Dorsolateral prefrontal cortex (tissue), 120 donors: ENCODE measurements at regions of chr13 and their contacts with region 1.

Region 1: GRCh38 chr13:110108347-110109174 is 198.4 kb downstream of the COL4A1 start:
- DNase-seq: peak; percentile 28 to 87 (median 82)
- H3K4me3 ChIP-seq: no peak overlapping the region
- H3K27ac ChIP-seq: peak overlapping the region in 15 of 59 donors; percentile 14 to 76 (median 50)
- H3K27me3 ChIP-seq: no peaks in the 10 kb centered on the region
- CTCF ChIP-seq: peak; percentile 16 to 82 (median 68)

Region 2: DNA sequence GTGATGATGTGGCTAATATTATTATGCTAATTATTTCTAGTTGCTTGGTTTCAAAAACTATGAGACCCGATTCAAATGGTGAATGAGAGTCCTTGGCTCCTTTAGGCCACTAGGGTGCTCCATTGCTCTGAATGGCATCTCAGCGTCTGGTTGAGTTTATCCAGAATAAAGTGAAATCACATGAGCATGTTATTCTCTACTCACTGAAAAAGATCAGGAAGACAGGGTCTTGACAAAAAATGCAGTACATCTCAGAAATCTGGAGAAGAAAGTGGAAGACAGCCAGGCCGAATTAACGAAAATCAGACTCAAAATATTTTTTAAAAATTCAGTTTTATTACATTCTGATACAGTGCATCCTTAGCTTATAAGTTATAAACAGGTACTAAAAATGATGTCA is 962.9 kb before region 1 on chr13:
- intact Hi-C with region 1: loop called in 1 of 2 experiments (anchors 10 kb)
- DNase-seq: peak in 2 of 10 donors; percentile 48 to 59
- H3K4me3 ChIP-seq: no peak overlapping the region
- H3K27ac ChIP-seq: no peak overlapping the region
- H3K27me3 ChIP-seq: peaks cover 0 to 22% (median 5%) of the 10 kb centered on the region in 45 donors
- CTCF ChIP-seq: peak in 55 of 56 donors; percentile 34 to 82 (median 67)

Region 3: DNA sequence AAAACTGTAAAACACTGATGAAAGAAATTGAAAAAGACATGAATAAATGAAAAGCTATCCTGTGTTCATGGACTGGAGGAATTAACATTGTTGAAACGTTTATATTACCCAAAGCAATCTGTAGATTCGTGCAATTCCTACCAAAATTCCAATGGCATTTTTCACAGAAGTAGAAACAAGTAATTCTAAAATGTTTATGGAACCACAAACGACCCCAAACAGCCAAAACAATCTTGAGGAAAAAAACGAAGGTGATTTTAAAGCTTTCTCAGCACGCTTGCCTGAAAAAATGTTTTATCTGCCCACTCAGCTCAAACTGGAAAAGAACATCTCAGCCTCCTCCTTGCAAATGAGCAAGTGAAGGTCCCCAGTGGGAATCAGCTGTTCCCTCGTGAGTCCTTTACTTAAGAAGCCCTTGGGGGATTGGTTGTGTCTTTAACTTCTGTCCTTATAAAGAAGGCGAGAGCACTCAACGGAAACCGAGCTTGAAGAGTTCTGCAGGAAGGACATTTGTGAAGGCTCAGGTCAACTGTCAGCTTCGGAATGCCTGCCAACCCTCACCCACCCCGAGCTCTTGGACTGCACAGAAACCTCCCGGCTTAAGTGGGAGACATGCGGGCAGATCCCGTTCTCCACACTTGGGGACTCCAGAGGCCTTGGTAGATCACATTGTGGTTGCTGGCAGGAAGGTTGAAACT is 66.2 kb before region 1 on chr13:
- intact Hi-C with region 1: no loop called
- DNase-seq: no peak
- H3K4me3 ChIP-seq: no peak overlapping the region
- H3K27ac ChIP-seq: no peak overlapping the region
- H3K27me3 ChIP-seq: peaks cover 0 to 5% (median 0%) of the 10 kb centered on the region in 45 donors
- CTCF ChIP-seq: no peak

Region 4: GRCh38 chr13:110233181-110233950 is 124.8 kb after region 1 on chr13:
- intact Hi-C with region 1: no loop called
- DNase-seq: no peak
- H3K4me3 ChIP-seq: peak overlapping the region in 25 of 59 donors; percentile 1 to 47 (median 21)
- H3K27ac ChIP-seq: peak overlapping the region in 33 of 59 donors; percentile 5 to 79 (median 45)
- H3K27me3 ChIP-seq: peaks cover 0 to 6% (median 0%) of the 10 kb centered on the region in 45 donors
- CTCF ChIP-seq: no peak